H1 (cell line): ENCODE measurements at regions of chr6 and their contacts with region 1.

Region 1: GRCh38 chr6:118263921-118264486 is 284.1 kb upstream of the PLN start:
- DNase-seq: no peak
- H3K4me3 ChIP-seq: no peak overlapping the region
- H3K27ac ChIP-seq: no peak overlapping the region
- H3K4me1 ChIP-seq: no peaks in the 10 kb centered on the region
- H3K27me3 ChIP-seq: no peaks in the 10 kb centered on the region
- CTCF ChIP-seq: peak in 2 of 3 experiments; percentile 57 to 76; a peak in 3 of 4 replicates
- EP300 ChIP-seq: no peak
- POLR2A ChIP-seq: no peak
- RAD21 ChIP-seq: peak; percentile 88 to 91

Region 2: GRCh38 chr6:117840541-117840983 is 423.4 kb before region 1 on chr6:
- CTCF ChIA-PET with region 1: interaction called, 43 read pairs
- POLR2A ChIA-PET with region 1: no interaction called
- DNase-seq: no peak
- H3K4me3 ChIP-seq: no peak overlapping the region
- H3K27ac ChIP-seq: no peak overlapping the region
- H3K4me1 ChIP-seq: peaks cover 0 to 4% (median 0%) of the 10 kb centered on the region in 4 experiments; a peak in 2 of 7 replicates
- H3K27me3 ChIP-seq: no peaks in the 10 kb centered on the region; a peak in 1 of 7 replicates
- CTCF ChIP-seq: peak in 2 of 3 experiments; percentile 55 to 56; a peak in 2 of 4 replicates
- EP300 ChIP-seq: no peak
- POLR2A ChIP-seq: no peak
- RAD21 ChIP-seq: peak; percentile 81 to 82

Region 3: GRCh38 chr6:117849087-117849486 is 414.9 kb before region 1 on chr6:
- CTCF ChIA-PET with region 1: interaction called, 16 read pairs
- POLR2A ChIA-PET with region 1: no interaction called
- DNase-seq: no peak
- H3K4me3 ChIP-seq: peak overlapping the region in 1 of 4 experiments; percentile 24; a peak in 1 of 8 replicates
- H3K27ac ChIP-seq: no peak overlapping the region
- H3K4me1 ChIP-seq: peaks cover 0 to 7% (median 1%) of the 10 kb centered on the region in 4 experiments; a peak in 1 of 7 replicates
- H3K27me3 ChIP-seq: no peaks in the 10 kb centered on the region; a peak in 1 of 7 replicates
- CTCF ChIP-seq: no peak
- EP300 ChIP-seq: no peak
- POLR2A ChIP-seq: no peak
- RAD21 ChIP-seq: no peak

Region 4: GRCh38 chr6:117976030-117976651 is 287.9 kb before region 1 on chr6:
- CTCF ChIA-PET with region 1: interaction called, 32 read pairs
- POLR2A ChIA-PET with region 1: no interaction called
- DNase-seq: no peak
- H3K4me3 ChIP-seq: no peak overlapping the region
- H3K27ac ChIP-seq: no peak overlapping the region
- H3K4me1 ChIP-seq: 0 out of 7 replicates have a peak, but pooled peaks cover 0 to 3% (median 0%) of the 10 kb centered on the region in 4 experiments
- H3K27me3 ChIP-seq: no peaks in the 10 kb centered on the region
- CTCF ChIP-seq: peak in 2 of 3 experiments; percentile 62 to 76; a peak in 3 of 4 replicates
- EP300 ChIP-seq: no peak
- POLR2A ChIP-seq: no peak
- RAD21 ChIP-seq: peak; percentile 71 to 78

Region 5: DNA sequence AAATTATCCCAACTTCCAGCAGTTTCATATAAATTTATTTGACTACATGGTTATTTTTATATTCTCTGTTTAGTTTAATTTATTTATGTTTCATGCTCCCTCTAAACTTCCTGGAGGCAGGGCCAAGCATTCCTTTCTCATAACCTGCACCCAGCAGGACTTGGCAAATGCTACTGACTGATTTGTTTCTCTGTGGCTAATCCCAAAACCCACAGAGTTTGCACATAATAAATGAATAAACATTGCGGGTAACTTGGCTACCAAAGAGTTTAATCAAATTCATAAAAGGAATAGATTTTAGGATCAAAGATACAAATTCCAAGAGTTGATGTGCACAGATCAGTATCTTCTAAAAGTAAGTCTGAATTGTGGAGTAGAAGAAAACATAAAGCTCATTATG is 117.4 kb before region 1 on chr6:
- CTCF ChIA-PET with region 1: no interaction called
- POLR2A ChIA-PET with region 1: no interaction called
- DNase-seq: no peak
- H3K4me3 ChIP-seq: no peak overlapping the region
- H3K27ac ChIP-seq: no peak overlapping the region
- H3K4me1 ChIP-seq: no peaks in the 10 kb centered on the region
- H3K27me3 ChIP-seq: peaks cover 0 to 1% (median 0%) of the 10 kb centered on the region in 4 experiments; a peak in 1 of 7 replicates
- CTCF ChIP-seq: no peak
- EP300 ChIP-seq: no peak
- POLR2A ChIP-seq: no peak
- RAD21 ChIP-seq: no peak

Region 6: GRCh38 chr6:118252474-118252873 is 11.5 kb before region 1 on chr6:
- CTCF ChIA-PET with region 1: interaction called, 17 read pairs
- POLR2A ChIA-PET with region 1: no interaction called
- DNase-seq: no peak
- H3K4me3 ChIP-seq: no peak overlapping the region
- H3K27ac ChIP-seq: no peak overlapping the region
- H3K4me1 ChIP-seq: no peaks in the 10 kb centered on the region
- H3K27me3 ChIP-seq: no peaks in the 10 kb centered on the region
- CTCF ChIP-seq: no peak
- EP300 ChIP-seq: no peak
- POLR2A ChIP-seq: no peak
- RAD21 ChIP-seq: no peak

Region 7: DNA sequence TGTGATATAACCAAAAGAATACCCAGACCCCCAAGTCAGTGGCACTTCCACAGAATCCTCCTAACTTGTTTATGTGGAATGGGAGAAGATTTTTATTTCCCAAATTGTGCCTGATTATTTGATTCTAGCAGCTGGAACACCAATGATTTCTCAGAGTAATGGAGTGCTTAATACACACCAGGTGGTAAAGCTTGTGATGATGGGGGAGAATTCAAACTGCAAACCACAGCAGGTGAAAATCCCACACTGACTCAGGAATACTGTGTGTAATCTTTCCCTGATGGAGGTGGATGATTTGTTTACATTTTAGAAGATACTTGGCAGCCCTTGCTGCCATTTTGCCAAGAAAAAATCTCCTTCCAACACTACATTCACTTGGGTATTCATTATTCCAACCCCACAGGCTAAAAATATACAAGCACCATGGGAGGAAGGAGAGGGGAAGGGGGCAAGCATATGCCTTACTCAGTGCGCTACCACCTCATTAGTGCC is 71.4 kb after region 1 on chr6:
- CTCF ChIA-PET with region 1: no interaction called
- POLR2A ChIA-PET with region 1: no interaction called
- DNase-seq: no peak
- H3K4me3 ChIP-seq: no peak overlapping the region
- H3K27ac ChIP-seq: no peak overlapping the region
- H3K4me1 ChIP-seq: no peaks in the 10 kb centered on the region
- H3K27me3 ChIP-seq: no peaks in the 10 kb centered on the region
- CTCF ChIP-seq: no peak
- EP300 ChIP-seq: no peak
- POLR2A ChIP-seq: no peak
- RAD21 ChIP-seq: no peak